Mucosa of descending colon (tissue), 3 donors: ENCODE measurements at regions of chr15 and their contacts with region 1.

Region 1: GRCh38 chr15:88904624-88905327 is 8.4 kb downstream of the MFGE8 start:
- DNase-seq: peak; percentile 87 to 92 (median 89)
- ATAC-seq: peak; percentile 93
- H3K4me3 ChIP-seq: no peak overlapping the region
- H3K4me1 ChIP-seq: no peaks in the 10 kb centered on the region
- CTCF ChIP-seq: peak; percentile 99

Region 2: GRCh38 chr15:89017370-89018066 is 112.7 kb after region 1 on chr15:
- intact Hi-C with region 1: loop called (anchors 5 to 10 kb)
- DNase-seq: peak; percentile 72 to 79 (median 74)
- ATAC-seq: peak; percentile 86
- H3K4me3 ChIP-seq: no peak overlapping the region
- H3K4me1 ChIP-seq: no peaks in the 10 kb centered on the region
- CTCF ChIP-seq: peak; percentile 58

Region 3: DNA sequence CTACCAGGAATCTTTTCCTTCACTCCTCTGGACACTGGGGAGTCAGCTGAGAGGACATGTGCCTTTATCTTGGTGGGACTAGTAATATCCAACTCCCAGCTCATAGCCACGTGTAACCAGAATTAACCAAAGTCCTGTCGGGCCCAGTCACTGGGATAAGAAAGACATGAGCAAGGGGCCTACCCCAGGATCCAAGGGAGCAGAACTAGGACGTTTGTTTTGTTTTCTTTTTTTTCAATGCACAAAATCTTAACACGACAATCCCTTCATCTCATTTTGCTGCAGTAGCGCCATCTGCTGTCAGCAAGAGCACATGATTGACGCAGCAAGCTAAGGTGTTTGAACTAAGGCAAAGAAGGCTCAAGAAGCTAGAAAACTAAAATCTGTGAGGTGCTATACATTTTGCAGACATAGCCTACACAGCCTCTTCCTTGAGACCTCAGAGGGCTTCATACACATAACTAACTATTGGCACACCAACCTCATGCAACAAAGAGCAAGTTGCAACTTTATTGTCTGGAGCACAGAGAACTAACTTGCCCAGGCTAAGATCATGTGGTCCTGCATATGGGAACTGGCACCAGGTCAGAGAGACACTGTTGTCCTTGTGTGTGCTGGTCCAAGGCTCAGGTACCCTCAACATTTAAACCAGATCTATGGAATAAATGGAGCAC is 273.0 kb after region 1 on chr15:
- intact Hi-C with region 1: loop called (anchors 10 kb)
- DNase-seq: peak in 2 of 3 donors; percentile 46 to 69
- ATAC-seq: peak; percentile 71
- H3K4me3 ChIP-seq: no peak overlapping the region
- H3K4me1 ChIP-seq: no peaks in the 10 kb centered on the region
- CTCF ChIP-seq: peak; percentile 54